ENCODE measurements at regions of chr7 and their contacts with region 1.

Region 1: GRCh38 chr7:30225863-30226613 is 58.4 kb upstream of the ZNRF2 start:
- DNase-seq: peak; percentile 60 to 75 (median 71)
- ATAC-seq: peak; percentile 80 to 97 (median 93)
- H3K4me3 ChIP-seq: no peak overlapping the region
- H3K27ac ChIP-seq: peak overlapping the region in 11 of 12 donors; percentile 42 to 83 (median 65)
- H3K4me1 ChIP-seq: peaks cover 0 to 49% (median 17%) of the 10 kb centered on the region in 12 donors
- H3K27me3 ChIP-seq: no peaks in the 10 kb centered on the region
- CTCF ChIP-seq: no peak
- POLR2A ChIP-seq: no peak

Region 2: DNA sequence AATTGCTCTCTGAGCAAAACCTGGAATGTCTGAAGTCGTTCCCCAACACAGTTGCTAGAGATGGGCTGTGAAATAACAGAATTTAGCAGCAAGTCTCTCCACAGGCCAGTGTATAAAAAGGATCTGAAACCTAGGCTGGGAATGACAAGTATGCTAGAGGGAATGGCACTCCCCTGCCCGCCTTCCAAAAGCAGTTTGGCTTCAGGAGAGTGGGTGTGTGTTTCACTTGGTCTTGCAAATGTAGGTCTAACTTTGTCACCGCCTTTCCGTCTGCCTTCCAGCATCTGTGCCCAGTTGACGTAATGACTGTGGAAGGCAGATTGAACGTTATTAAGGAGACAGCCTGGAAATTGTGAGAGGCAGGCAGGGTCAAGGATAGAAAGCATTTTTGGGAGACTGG is 109.3 kb before region 1 on chr7:
- intact Hi-C with region 1: no loop called
- DNase-seq: peak in 3 of 5 donors; percentile 41 to 47 (median 42)
- ATAC-seq: peak; percentile 83 to 91 (median 89)
- H3K4me3 ChIP-seq: peak overlapping the region in 1 of 12 donors; percentile 9
- H3K27ac ChIP-seq: peak overlapping the region in 8 of 12 donors; percentile 8 to 60 (median 48)
- H3K4me1 ChIP-seq: peaks cover 0 to 15% (median 4%) of the 10 kb centered on the region in 12 donors
- H3K27me3 ChIP-seq: no peaks in the 10 kb centered on the region
- CTCF ChIP-seq: no peak
- POLR2A ChIP-seq: no peak

Region 3: GRCh38 chr7:30178748-30179436 is 47.1 kb before region 1 on chr7:
- intact Hi-C with region 1: loop called in 3 of 10 experiments (anchors 5 kb)
- DNase-seq: no peak
- ATAC-seq: no peak
- H3K4me3 ChIP-seq: no peak overlapping the region
- H3K27ac ChIP-seq: peak overlapping the region in 1 of 12 donors; percentile 53
- H3K4me1 ChIP-seq: peaks cover 0 to 71% (median 37%) of the 10 kb centered on the region in 12 donors
- H3K27me3 ChIP-seq: no peaks in the 10 kb centered on the region
- CTCF ChIP-seq: no peak
- POLR2A ChIP-seq: no peak

Region 4: GRCh38 chr7:30184791-30185487 is 41.1 kb before region 1 on chr7:
- intact Hi-C with region 1: loop called in 3 of 10 experiments (anchors 5 kb)
- DNase-seq: peak in 3 of 5 donors; percentile 41 to 80 (median 51)
- ATAC-seq: peak; percentile 81 to 96 (median 88)
- H3K4me3 ChIP-seq: no peak overlapping the region
- H3K27ac ChIP-seq: peak overlapping the region; percentile 37 to 88 (median 58)
- H3K4me1 ChIP-seq: peaks cover 0 to 36% (median 19%) of the 10 kb centered on the region in 12 donors
- H3K27me3 ChIP-seq: no peaks in the 10 kb centered on the region
- CTCF ChIP-seq: no peak
- POLR2A ChIP-seq: no peak

Region 5: DNA sequence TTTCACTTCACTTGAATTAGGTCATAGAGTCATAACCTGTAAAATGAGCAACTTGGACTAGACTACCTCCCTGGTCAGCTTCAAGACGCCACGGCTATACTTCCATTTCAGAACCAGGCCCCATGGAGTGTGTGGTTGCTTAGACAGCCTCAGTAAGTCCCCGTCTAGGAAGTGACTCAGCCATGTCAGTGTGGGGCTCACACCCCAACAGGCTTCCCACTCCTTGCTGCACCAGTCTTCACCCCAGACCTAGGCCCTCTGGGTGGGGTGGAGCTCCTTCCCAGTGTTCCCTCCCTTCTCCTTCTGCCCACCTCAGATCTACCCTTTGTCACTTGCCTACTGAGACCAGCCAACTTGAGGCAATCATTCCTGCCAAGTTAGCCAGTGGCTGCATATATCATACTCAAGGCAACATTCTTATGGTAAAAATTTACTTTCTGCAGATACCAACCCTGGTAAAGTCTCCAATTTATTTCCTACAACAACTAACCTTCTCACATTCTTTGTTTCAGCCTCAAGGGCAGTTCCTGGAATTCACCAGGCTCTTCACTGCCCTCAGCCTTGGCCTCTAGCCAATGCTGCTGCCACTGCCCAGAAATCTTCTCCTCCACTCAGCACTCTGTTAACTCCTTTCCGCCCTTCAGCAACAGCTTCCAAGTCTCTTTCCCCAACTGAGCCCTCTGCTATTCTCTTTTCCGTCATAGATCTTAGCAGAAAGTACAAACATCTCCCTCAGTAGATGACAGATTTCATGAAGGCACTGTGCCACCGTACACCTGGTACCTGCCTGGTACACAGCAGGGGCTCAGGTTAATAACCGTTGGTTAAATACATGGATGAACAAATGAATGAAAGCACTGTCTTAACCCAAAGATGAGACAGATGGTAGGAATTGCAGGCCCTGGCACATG is 27.1 kb after region 1 on chr7:
- intact Hi-C with region 1: loop called in 1 of 10 experiments (anchors 1 kb)
- DNase-seq: peak; percentile 68 to 82 (median 74)
- ATAC-seq: peak; percentile 88 to 96 (median 92)
- H3K4me3 ChIP-seq: no peak overlapping the region
- H3K27ac ChIP-seq: peak overlapping the region in 7 of 12 donors; percentile 54 to 82 (median 74)
- H3K4me1 ChIP-seq: peaks cover 0 to 60% (median 20%) of the 10 kb centered on the region in 12 donors
- H3K27me3 ChIP-seq: no peaks in the 10 kb centered on the region
- CTCF ChIP-seq: no peak
- POLR2A ChIP-seq: no peak

Region 6: GRCh38 chr7:30702200-30702599 is 476.2 kb after region 1 on chr7:
- intact Hi-C with region 1: no loop called
- DNase-seq: no peak
- ATAC-seq: no peak
- H3K4me3 ChIP-seq: no peak overlapping the region
- H3K27ac ChIP-seq: no peak overlapping the region
- H3K4me1 ChIP-seq: peaks cover 0 to 28% (median 7%) of the 10 kb centered on the region in 12 donors
- H3K27me3 ChIP-seq: no peaks in the 10 kb centered on the region
- CTCF ChIP-seq: peak in 1 of 12 donors; percentile 9
- POLR2A ChIP-seq: no peak